CD4-positive, alpha-beta T cell (primary cell): ENCODE measurements at regions of chr6 and their contacts with region 1.

Region 1: DNA sequence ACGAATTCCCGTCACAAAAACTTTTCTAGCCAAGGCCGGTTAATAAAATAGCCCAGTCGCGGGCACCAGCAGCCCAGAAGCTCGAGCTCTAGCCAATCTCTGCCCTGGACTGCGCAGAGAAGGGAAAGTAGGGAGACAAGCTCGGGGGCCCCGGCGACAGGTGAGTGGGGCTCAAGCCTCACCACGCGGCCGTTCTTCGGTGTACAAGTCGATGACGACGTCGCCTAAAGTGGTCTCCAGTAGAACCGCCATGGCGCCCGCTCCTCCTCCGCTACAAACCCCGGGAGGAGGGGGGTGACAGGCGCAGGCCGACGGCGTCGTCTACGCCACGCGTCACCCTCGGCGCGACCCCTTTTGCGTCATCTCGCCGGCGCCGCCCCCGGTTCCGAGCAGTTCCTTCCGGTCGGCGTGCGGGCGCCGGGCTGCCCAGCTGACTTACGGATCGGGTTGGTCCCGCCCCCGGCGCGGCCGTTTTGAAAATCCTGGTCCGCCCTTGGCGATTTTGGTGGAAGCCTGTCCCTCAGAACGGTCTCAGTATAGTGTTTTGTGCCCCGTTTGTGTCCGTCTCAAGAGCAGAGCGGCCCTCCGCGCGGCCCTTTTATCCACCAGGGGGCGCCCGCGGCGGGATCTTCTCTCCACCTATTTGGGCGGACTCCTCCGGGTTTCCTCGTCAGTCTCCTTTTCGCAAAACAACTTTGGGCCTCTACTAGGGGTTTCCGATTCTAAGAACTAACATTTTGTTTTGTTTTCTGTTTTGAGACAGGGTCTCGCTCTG is at the start of gene PPIL4:
- DNase-seq: peak; percentile 93 to 99 (median 96)
- ATAC-seq: peak; percentile 82
- H3K4me3 ChIP-seq: peak within 1 kb of the TSS; percentile 69
- H3K4me3 Mint-ChIP-seq: peak within 1 kb of the TSS; percentile 99
- H3K27ac ChIP-seq: peak within 1 kb of the TSS; percentile 98 to 99
- H3K27ac Mint-ChIP-seq: peak within 1 kb of the TSS; percentile 96
- H3K4me1 ChIP-seq: peaks cover 21% of the 10 kb centered on the region
- H3K4me1 Mint-ChIP-seq: peaks cover 37% of the 10 kb centered on the region
- H3K27me3 ChIP-seq: no peaks in the 10 kb centered on the region
- H3K27me3 Mint-ChIP-seq: no peaks in the 10 kb centered on the region
- CTCF ChIP-seq: peak; percentile 99
- total RNA-seq, gene PPIL4: 51.8 to 53.5 TPM

Region 2: DNA sequence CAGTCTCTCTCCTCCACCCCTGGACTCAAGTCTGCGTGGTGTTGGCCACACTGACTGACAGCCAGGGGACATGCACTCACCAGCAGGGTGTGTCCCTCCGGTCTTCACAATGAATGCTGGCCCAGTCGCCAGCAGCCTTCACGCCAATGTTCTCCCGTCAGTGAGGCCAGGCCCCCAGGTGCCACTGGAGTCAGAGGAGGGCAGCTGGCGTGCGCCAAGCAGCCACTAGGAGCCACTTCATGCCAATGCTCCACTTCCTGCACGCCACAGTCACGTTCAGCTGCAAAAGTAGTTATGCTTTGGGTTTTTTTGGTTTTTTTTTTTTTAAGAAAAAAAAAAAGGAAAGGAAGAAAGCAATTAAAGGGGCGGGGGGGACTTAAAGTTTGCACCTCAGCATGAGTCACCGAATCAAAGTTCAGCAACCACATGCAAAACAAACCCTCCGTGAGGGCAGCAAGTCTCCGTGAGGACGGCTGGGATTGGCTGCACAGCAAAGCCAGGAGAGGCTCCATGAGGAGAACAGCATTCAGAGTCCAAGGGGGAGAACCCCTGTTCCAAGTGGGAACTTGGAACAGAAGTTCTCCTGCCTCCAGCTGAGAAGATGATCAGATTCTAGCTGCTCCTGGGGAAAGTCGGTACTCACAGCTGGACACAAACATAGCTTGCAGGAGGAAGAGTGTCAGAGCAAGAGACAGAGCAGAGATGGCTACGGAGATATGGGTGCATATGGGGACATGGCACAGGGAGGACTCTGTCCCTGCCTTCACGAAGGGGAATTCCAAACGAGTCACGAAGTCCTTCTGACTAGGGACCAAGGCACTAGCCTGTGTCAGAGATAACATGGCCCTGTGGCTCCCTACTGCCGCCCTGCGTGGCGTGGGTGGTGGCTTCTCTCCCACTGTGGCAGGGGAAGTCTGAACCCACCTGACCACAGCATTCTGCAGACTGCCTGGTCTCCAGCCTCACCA is 60.9 kb before region 1 on chr6 and contains the start of gene ZC3H12D:
- CTCF ChIA-PET with region 1: interaction called, 15 read pairs
- POLR2A ChIA-PET with region 1: interaction called, 16 read pairs
- intact Hi-C with region 1: no loop called
- DNase-seq: peak; percentile 74 to 95 (median 81)
- ATAC-seq: peak; percentile 77
- H3K4me3 ChIP-seq: peak within 1 kb of the TSS; percentile 68
- H3K4me3 Mint-ChIP-seq: peak within 1 kb of the TSS; percentile 92
- H3K27ac ChIP-seq: peak within 1 kb of the TSS; percentile 91 to 97
- H3K27ac Mint-ChIP-seq: peak within 1 kb of the TSS; percentile 99
- H3K4me1 ChIP-seq: peaks cover 75% of the 10 kb centered on the region
- H3K4me1 Mint-ChIP-seq: peaks cover 61% of the 10 kb centered on the region
- H3K27me3 ChIP-seq: no peaks in the 10 kb centered on the region
- H3K27me3 Mint-ChIP-seq: no peaks in the 10 kb centered on the region
- CTCF ChIP-seq: peak; percentile 76
- total RNA-seq, gene ZC3H12D: 70.2 to 71.0 TPM

Region 3: GRCh38 chr6:149565527-149566409 is 19.8 kb after region 1 on chr6 and contains the start of gene GINM1:
- CTCF ChIA-PET with region 1: interaction called, 65 read pairs
- POLR2A ChIA-PET with region 1: interaction called, 42 read pairs
- intact Hi-C with region 1: loop called (anchors 1 kb)
- DNase-seq: peak; percentile 88 to 97 (median 95)
- ATAC-seq: peak; percentile 83
- H3K4me3 ChIP-seq: peak within 1 kb of the TSS; percentile 92
- H3K4me3 Mint-ChIP-seq: peak within 1 kb of the TSS; percentile 99
- H3K27ac ChIP-seq: peak within 1 kb of the TSS; percentile 67 to 92
- H3K27ac Mint-ChIP-seq: peak within 1 kb of the TSS; percentile 94
- H3K4me1 ChIP-seq: peaks cover 22% of the 10 kb centered on the region
- H3K4me1 Mint-ChIP-seq: peaks cover 29% of the 10 kb centered on the region
- H3K27me3 ChIP-seq: no peaks in the 10 kb centered on the region
- H3K27me3 Mint-ChIP-seq: no peaks in the 10 kb centered on the region
- CTCF ChIP-seq: peak; percentile 88
- total RNA-seq, gene GINM1: 24.1 to 25.9 TPM

Region 4: DNA sequence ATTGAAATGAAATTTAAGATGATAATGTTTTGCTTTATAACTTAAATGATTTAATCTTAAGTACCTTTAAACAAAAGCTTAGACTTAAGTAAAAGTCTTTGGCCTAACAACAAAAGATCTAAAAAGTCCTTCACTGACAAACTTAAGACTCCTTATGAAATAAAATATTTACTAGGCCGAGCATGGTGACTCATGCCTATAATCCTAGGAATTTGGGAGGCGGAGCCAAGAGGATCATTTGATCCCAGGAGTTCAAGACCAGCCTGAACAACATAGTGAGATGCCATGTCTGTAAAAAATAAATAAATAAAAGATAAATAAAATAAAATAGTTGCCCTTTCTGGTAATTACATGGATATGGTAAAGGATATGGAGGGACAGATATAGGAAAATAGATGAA is 90.2 kb after region 1 on chr6:
- CTCF ChIA-PET with region 1: no interaction called
- POLR2A ChIA-PET with region 1: no interaction called
- intact Hi-C with region 1: no loop called
- DNase-seq: no peak
- ATAC-seq: no peak
- H3K4me3 ChIP-seq: no peak overlapping the region
- H3K4me3 Mint-ChIP-seq: no peak overlapping the region
- H3K27ac ChIP-seq: no peak overlapping the region
- H3K27ac Mint-ChIP-seq: no peak overlapping the region
- H3K4me1 ChIP-seq: no peaks in the 10 kb centered on the region
- H3K4me1 Mint-ChIP-seq: peaks cover 9% of the 10 kb centered on the region
- H3K27me3 ChIP-seq: no peaks in the 10 kb centered on the region
- H3K27me3 Mint-ChIP-seq: no peaks in the 10 kb centered on the region
- CTCF ChIP-seq: no peak

Region 5: DNA sequence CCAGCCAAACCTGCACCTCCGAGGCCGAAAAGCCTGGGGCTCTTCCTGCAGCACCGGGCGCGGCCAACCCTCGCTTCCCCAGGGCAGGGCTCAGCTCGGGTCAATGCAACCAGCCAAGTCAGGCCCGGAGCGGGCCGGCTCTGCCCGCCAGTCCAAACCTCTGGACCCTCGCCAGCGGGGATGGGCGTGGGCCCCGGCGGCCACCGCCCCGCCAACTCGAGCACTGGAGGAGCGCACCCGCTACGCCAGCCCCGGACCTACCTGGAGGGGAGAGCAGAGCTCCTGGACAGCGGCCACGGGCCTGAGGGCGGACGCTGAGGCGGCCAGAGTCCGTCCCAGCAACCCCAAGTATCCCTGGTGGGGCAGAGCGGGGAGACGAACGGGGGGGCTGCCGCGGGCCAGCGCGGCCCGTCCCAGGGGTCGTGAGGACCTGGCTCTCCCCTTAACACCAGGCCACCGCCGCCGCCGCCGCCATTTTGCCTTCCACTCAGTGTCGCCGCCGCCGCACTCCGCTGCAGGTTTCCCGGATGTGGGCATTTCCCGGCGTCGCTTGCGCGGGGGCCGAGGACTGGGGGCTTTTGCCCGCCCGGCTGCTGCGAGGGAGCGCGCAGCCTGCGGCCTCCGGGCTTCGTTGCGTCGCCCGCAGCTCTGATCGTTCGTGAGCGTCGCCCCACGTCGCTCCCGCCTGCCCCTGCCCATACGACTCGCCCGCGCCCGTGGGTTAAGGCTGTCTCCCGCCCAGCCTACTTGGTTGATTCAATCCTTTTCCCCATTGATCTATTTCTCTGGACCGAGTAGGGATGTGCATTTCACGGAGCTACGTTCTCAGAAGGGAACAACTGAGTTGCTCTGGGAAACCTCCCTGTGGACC is 171.9 kb after region 1 on chr6 and contains the start of gene LATS1:
- CTCF ChIA-PET with region 1: interaction called, 3 read pairs
- POLR2A ChIA-PET with region 1: interaction called, 16 read pairs
- intact Hi-C with region 1: loop called in 1 of 2 experiments (anchors 5 kb)
- DNase-seq: peak; percentile 85 to 94 (median 89)
- ATAC-seq: peak; percentile 87
- H3K4me3 ChIP-seq: peak within 1 kb of the TSS; percentile 84
- H3K4me3 Mint-ChIP-seq: peak within 1 kb of the TSS; percentile 100
- H3K27ac ChIP-seq: peak within 1 kb of the TSS; percentile 92 to 95
- H3K27ac Mint-ChIP-seq: peak within 1 kb of the TSS; percentile 99
- H3K4me1 ChIP-seq: peaks cover 21% of the 10 kb centered on the region
- H3K4me1 Mint-ChIP-seq: peaks cover 47% of the 10 kb centered on the region
- H3K27me3 ChIP-seq: no peaks in the 10 kb centered on the region
- H3K27me3 Mint-ChIP-seq: no peaks in the 10 kb centered on the region
- CTCF ChIP-seq: no peak
- total RNA-seq, gene LATS1: 36.1 to 39.6 TPM

Region 6: DNA sequence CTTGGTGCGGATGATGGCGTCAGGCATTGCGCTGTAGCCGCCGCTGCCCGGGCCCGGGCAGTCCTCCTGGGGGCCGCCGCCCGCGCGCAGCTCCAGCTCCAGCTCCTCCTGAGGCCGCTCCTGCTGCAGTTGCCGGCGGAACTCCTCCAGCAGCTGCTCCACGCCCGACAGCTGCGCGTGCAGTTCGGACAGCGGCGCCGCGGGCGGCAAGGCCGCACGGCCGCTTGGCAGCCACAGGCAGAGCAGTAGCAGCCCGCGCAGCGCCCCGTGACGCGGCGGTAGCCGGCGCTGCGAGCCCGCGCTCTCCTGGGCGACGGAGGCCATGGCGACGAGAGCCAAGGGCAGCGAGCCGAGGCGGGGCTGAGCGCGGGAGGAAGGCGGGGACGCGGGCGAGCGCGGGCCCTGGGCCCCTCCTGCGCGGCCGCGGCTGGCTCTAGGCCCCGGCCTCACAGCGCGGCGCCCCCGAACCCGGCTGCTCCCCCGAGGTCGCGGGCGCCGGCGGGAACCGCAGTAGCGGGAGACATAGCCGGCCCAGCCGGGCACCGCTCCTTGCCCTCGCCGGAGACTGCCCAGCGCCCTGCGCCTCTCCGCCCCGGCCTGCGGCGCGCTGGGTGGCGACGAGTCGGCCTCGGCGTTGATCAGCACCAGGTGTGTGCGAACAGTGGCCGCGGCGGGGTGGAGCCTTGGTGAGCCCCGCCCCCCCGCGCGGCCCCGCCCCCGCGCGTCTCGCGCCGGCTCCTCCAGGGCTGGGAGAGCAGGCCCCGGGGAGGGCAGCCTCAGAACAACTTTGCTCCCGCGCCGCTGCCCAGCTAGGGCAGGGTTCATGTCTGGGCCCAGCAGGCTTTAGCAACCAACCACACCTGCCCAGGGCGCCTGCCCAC is 318.0 kb after region 1 on chr6 and contains the start of gene LRP11:
- CTCF ChIA-PET with region 1: no interaction called
- POLR2A ChIA-PET with region 1: no interaction called
- intact Hi-C with region 1: loop called in 1 of 2 experiments (anchors 5 kb)
- DNase-seq: peak; percentile 66 to 91 (median 80)
- ATAC-seq: peak; percentile 87
- H3K4me3 ChIP-seq: peak within 1 kb of the TSS; percentile 54
- H3K4me3 Mint-ChIP-seq: peak within 1 kb of the TSS; percentile 86
- H3K27ac ChIP-seq: no peak within 1 kb of the TSS
- H3K27ac Mint-ChIP-seq: peak within 1 kb of the TSS; percentile 68
- H3K4me1 ChIP-seq: peaks cover 18% of the 10 kb centered on the region
- H3K4me1 Mint-ChIP-seq: peaks cover 5% of the 10 kb centered on the region
- H3K27me3 ChIP-seq: peaks cover 0 to 3% of the 10 kb centered on the region in 2 experiments
- H3K27me3 Mint-ChIP-seq: peaks cover 22% of the 10 kb centered on the region
- CTCF ChIP-seq: no peak
- total RNA-seq, gene LRP11: 0.75 to 0.99 TPM